K562 (cell line): ENCODE measurements at regions of chr3 and their contacts with region 1.

Region 1: GRCh38 chr3:119559441-119559963 is at the start of gene CD80:
- DNase-seq: peak; percentile 20 to 83 (median 43)
- ATAC-seq: peak; percentile 96
- H3K4me3 ChIP-seq: peak within 1 kb of the TSS; percentile 37
- H3K27ac ChIP-seq: peak within 1 kb of the TSS; percentile 73
- H3K4me1 ChIP-seq: peaks cover 0 to 12% of the 10 kb centered on the region in 2 experiments; a peak in 3 of 5 replicates
- H3K27me3 ChIP-seq: no peaks in the 10 kb centered on the region
- CTCF ChIP-seq: peak; percentile 56 to 72 (median 62); a peak in 5 of 6 replicates
- EP300 ChIP-seq: no peak
- POLR2A ChIP-seq: no peak
- RAD21 ChIP-seq: peak; percentile 54 to 67
- polyA plus RNA-seq, gene CD80: 5.7 to 6.6 TPM

Region 2: GRCh38 chr3:119368298-119368697 is 191.2 kb before region 1 on chr3:
- CTCF ChIA-PET with region 1: no interaction called
- POLR2A ChIA-PET with region 1: no interaction called
- in situ Hi-C with region 1: no loop called
- intact Hi-C with region 1: no loop called
- DNase-seq: no peak
- ATAC-seq: no peak
- H3K4me3 ChIP-seq: no peak overlapping the region
- H3K27ac ChIP-seq: no peak overlapping the region
- H3K4me1 ChIP-seq: no peaks in the 10 kb centered on the region; a peak in 2 of 5 replicates
- H3K27me3 ChIP-seq: peaks cover 0 to 6% of the 10 kb centered on the region in 2 experiments; a peak in 1 of 5 replicates
- CTCF ChIP-seq: no peak
- EP300 ChIP-seq: no peak
- POLR2A ChIP-seq: no peak
- RAD21 ChIP-seq: no peak

Region 3: DNA sequence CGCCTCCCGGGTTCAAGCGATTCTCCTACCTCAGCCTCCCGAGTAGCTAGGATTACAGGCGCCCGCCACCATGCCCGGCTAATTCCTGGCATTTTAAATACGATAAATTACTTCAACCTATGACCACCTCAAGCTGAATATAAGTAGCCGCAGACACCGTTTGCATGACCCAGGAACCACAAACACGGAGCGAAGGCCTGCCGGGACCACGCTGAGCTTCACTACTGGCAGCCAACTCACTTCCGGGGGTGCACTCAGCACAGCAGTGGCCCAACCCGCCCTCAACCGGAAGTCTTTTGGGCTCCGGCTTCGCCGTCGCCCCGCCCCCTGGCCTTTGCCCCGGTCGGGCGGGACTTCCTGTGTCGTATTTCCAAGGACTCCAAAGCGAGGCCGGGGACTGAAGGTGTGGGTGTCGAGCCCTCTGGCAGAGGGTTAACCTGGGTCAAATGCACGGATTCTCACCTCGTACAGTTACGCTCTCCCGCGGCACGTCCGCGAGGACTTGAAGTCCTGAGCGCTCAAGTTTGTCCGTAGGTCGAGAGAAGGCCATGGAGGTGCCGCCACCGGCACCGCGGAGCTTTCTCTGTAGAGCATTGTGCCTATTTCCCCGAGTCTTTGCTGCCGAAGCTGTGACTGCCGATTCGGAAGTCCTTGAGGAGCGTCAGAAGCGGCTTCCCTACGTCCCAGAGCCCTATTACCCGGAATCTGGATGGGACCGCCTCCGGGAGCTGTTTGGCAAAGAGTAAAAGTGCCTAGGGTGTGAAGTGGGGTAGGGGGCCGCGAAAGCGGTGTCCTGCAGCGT is 61.1 kb before region 1 on chr3 and contains the start of gene TIMMDC1:
- CTCF ChIA-PET with region 1: no interaction called
- POLR2A ChIA-PET with region 1: no interaction called
- in situ Hi-C with region 1: no loop called
- intact Hi-C with region 1: loop called (anchors 2 kb)
- DNase-seq: peak; percentile 90 to 96 (median 92)
- ATAC-seq: peak; percentile 91
- H3K4me3 ChIP-seq: peak within 1 kb of the TSS; percentile 70
- H3K27ac ChIP-seq: peak within 1 kb of the TSS; percentile 94
- H3K4me1 ChIP-seq: no peaks in the 10 kb centered on the region; a peak in 1 of 5 replicates
- H3K27me3 ChIP-seq: no peaks in the 10 kb centered on the region
- CTCF ChIP-seq: no peak
- EP300 ChIP-seq: no peak
- POLR2A ChIP-seq: peak; percentile 90
- RAD21 ChIP-seq: no peak
- polyA plus RNA-seq, gene TIMMDC1: 224 to 226 TPM

Region 4: GRCh38 chr3:119524931-119525662 is 34.4 kb before region 1 on chr3:
- CTCF ChIA-PET with region 1: no interaction called
- POLR2A ChIA-PET with region 1: interaction called, 3 read pairs
- in situ Hi-C with region 1: no loop called
- intact Hi-C with region 1: loop called (anchors 2 kb)
- DNase-seq: peak in 1 of 4 experiments; percentile 12
- ATAC-seq: peak; percentile 74
- H3K4me3 ChIP-seq: no peak overlapping the region
- H3K27ac ChIP-seq: no peak overlapping the region
- H3K4me1 ChIP-seq: no peaks in the 10 kb centered on the region; a peak in 1 of 5 replicates
- H3K27me3 ChIP-seq: no peaks in the 10 kb centered on the region
- CTCF ChIP-seq: peak in 2 of 3 experiments; percentile 15 to 63; a peak in 3 of 6 replicates
- EP300 ChIP-seq: no peak
- POLR2A ChIP-seq: no peak
- RAD21 ChIP-seq: peak; percentile 58 to 70